ENCODE measurements at regions of chr20 and their contacts with region 1.

Region 1: GRCh38 chr20:63612276-63612928 is 14.5 kb downstream of the GMEB2 start:
- DNase-seq: no peak
- ATAC-seq: peak in 6 of 8 donors; percentile 25 to 58 (median 40)
- H3K4me3 ChIP-seq: no peak overlapping the region
- H3K27ac ChIP-seq: peak overlapping the region in 1 of 10 donors; percentile 65
- H3K4me1 ChIP-seq: peaks cover 0 to 29% (median 0%) of the 10 kb centered on the region in 9 donors
- H3K27me3 ChIP-seq: no peaks in the 10 kb centered on the region
- CTCF ChIP-seq: no peak

Region 2: DNA sequence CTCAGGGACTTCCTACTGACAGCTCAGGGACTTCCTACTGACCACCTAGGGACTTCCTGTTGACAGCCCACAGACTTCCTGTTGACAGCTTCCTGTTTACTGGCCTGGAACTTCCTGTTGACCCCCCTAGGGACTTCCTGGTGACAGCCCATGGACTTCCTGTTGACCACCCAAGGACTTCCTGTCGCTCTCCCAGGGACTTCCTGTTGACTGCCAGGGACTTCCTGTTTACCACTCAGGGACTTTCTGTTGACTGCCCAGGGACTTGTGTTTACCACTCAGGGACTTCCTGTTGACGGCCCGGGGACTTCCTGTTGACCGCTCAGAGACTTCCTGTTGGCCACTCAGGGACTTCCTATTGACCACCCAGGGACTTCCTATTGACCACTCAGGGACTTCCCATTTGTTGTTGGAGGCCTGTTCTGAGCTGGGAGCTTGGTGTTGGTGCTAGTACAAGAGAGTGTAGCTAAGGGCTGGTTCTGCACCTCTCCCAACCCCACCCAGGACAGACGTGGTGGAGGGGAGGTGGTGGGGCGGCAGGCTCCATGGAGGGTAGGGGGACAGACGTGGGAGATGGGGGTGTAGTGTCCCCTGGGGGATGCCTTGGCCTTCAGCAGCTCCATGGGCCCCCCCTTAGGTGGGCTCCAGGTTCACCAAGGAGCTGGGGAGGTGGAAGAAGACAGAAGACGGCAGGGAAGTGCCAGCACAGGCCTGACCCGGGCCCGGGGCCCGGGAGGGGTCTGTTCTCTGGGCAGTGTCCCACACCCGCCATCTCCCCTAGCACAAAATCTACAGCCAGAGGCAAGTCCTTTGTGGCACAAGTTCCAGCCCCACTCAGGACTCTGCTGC is 285.3 kb before region 1 on chr20:
- intact Hi-C with region 1: loop called in 1 of 10 experiments (anchors 5 kb)
- DNase-seq: no peak
- ATAC-seq: no peak
- H3K4me3 ChIP-seq: no peak overlapping the region
- H3K27ac ChIP-seq: peak overlapping the region in 3 of 10 donors; percentile 33 to 58 (median 47)
- H3K4me1 ChIP-seq: peaks cover 0 to 4% (median 0%) of the 10 kb centered on the region in 9 donors
- H3K27me3 ChIP-seq: peaks cover 0 to 28% (median 17%) of the 10 kb centered on the region in 7 donors
- CTCF ChIP-seq: no peak

Region 3: GRCh38 chr20:63434599-63435378 is 177.6 kb before region 1 on chr20:
- intact Hi-C with region 1: no loop called
- DNase-seq: peak; percentile 23 to 56
- ATAC-seq: peak in 6 of 8 donors; percentile 21 to 70 (median 53)
- H3K4me3 ChIP-seq: no peak overlapping the region
- H3K27ac ChIP-seq: peak overlapping the region in 1 of 10 donors; percentile 49
- H3K4me1 ChIP-seq: peaks cover 0 to 17% (median 5%) of the 10 kb centered on the region in 9 donors
- H3K27me3 ChIP-seq: peaks cover 0 to 7% (median 0%) of the 10 kb centered on the region in 7 donors
- CTCF ChIP-seq: peak; percentile 40 to 88 (median 72)

Region 4: GRCh38 chr20:64010711-64011237 is 398.4 kb after region 1 on chr20:
- intact Hi-C with region 1: no loop called
- DNase-seq: no peak
- ATAC-seq: no peak
- H3K4me3 ChIP-seq: no peak overlapping the region
- H3K27ac ChIP-seq: peak overlapping the region in 1 of 10 donors; percentile 40
- H3K4me1 ChIP-seq: peaks cover 0 to 15% (median 0%) of the 10 kb centered on the region in 9 donors
- H3K27me3 ChIP-seq: no peaks in the 10 kb centered on the region
- CTCF ChIP-seq: no peak

Measured in heart right ventricle (tissue), 16 donors.